CD8-positive, alpha-beta memory T cell (primary cell): ENCODE measurements at regions of chr11 and their contacts with region 1.

Region 1: GRCh38 chr11:15101072-15101709 is 13.5 kb upstream of the INSC start:
- DNase-seq: peak in 4 of 5 donors; percentile 10 to 58 (median 20)
- H3K4me3 ChIP-seq: no peak overlapping the region
- H3K4me3 Mint-ChIP-seq: no peak overlapping the region
- H3K27ac ChIP-seq: no peak overlapping the region
- H3K27ac Mint-ChIP-seq: no peak overlapping the region
- H3K4me1 ChIP-seq: no peaks in the 10 kb centered on the region
- H3K4me1 Mint-ChIP-seq: peaks cover 0 to 4% (median 0%) of the 10 kb centered on the region in 3 donors
- H3K27me3 ChIP-seq: no peaks in the 10 kb centered on the region
- H3K27me3 Mint-ChIP-seq: peaks cover 6 to 50% of the 10 kb centered on the region in 2 donors

Region 2: DNA sequence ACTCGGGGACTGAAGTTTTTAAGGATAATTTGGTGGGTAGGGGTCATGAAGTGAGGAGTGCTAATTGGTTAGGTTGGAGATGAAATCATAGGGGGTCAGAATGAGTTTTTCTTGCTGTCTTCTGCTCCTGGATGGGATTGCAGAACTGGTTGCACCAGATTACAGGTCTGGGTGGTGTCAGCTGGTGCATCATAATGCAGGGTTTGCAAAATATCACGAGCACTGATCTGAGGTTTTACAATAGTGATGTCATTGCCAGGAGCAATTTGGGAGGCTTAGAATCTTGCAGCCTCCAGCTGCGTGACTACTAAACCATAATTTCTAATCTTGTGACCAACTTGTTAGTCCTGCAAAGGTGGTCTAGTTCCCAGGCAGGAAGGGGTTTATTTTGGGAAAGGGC is 74.2 kb before region 1 on chr11:
- CTCF ChIA-PET with region 1: no interaction called
- POLR2A ChIA-PET with region 1: no interaction called
- DNase-seq: no peak
- H3K4me3 ChIP-seq: no peak overlapping the region
- H3K4me3 Mint-ChIP-seq: no peak overlapping the region
- H3K27ac ChIP-seq: no peak overlapping the region
- H3K27ac Mint-ChIP-seq: no peak overlapping the region
- H3K4me1 ChIP-seq: no peaks in the 10 kb centered on the region
- H3K4me1 Mint-ChIP-seq: peaks cover 0 to 4% (median 3%) of the 10 kb centered on the region in 3 donors
- H3K27me3 ChIP-seq: no peaks in the 10 kb centered on the region
- H3K27me3 Mint-ChIP-seq: peaks cover 12 to 54% of the 10 kb centered on the region in 2 donors

Region 3: DNA sequence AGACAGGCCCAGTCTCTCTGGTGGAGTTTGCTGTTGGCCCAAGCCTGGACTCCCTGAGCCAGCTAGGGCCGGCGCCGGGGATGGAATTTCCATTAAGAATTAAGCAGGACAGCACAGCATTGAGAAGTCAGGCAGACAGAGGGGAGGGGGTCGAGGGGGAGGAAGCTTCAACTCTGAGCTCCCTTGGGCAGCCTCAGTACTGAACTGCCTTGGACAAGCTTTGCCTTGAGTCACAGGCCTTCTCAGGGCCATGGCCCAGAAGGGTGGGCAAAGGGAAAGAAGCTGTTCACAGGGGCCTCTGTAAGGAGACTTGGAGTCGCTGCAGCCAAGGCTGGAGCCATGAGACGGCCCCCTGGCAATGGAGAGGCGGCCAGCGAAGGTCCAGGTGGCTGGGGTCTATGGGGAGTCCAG is 10.9 kb after region 1 on chr11:
- CTCF ChIA-PET with region 1: interaction called, 18 read pairs
- POLR2A ChIA-PET with region 1: no interaction called
- DNase-seq: no peak
- H3K4me3 ChIP-seq: no peak overlapping the region
- H3K4me3 Mint-ChIP-seq: no peak overlapping the region
- H3K27ac ChIP-seq: no peak overlapping the region
- H3K27ac Mint-ChIP-seq: no peak overlapping the region
- H3K4me1 ChIP-seq: no peaks in the 10 kb centered on the region
- H3K4me1 Mint-ChIP-seq: peaks cover 9 to 17% (median 12%) of the 10 kb centered on the region in 3 donors
- H3K27me3 ChIP-seq: peaks cover 16% of the 10 kb centered on the region
- H3K27me3 Mint-ChIP-seq: peaks cover 16 to 39% of the 10 kb centered on the region in 2 donors